Left cardiac atrium (tissue), 4 donors: ENCODE measurements at regions of chr9 and their contacts with region 1.

Region 1: GRCh38 chr9:82961504-82962125 is 101.3 kb downstream of the RASEF start:
- DNase-seq: peak; percentile 78
- ATAC-seq: peak; percentile 92 to 94

Region 2: GRCh38 chr9:82117026-82117811 is 844.4 kb before region 1 on chr9:
- intact Hi-C with region 1: no loop called
- DNase-seq: no peak
- ATAC-seq: peak in 1 of 2 donors; percentile 53

Region 3: DNA sequence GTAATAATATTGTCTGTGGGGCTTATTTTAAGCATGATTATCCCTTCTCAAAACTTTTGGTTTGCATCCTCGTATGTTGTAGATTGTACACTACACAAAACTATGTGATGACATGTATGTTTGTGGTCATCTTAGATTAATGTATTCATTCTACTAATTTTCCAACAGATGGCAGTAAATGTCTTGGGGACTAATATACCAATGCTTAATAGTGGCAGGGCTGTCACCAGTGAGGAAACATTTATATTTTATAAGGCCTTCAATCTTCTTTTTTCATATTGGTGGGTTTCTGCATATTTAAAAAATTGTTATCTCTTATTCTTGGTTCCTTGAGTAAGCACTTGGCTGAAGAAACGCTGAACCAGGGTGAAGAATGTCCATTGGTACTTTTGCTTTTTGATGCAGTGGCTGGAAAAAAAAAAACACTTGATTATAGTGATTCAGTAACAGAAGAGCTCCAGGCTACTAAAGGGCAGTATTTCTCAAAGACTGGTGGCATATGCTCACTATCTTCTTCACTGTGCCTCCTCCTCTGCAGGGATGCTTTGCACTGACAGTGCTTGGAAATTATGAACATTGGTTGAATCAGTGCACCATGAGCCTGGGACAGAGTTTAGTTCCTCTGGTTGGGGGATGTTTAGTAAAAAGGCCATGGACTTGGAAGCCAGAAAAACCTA is 429.0 kb before region 1 on chr9:
- intact Hi-C with region 1: loop called in 1 of 2 experiments (anchors 10 kb)
- DNase-seq: no peak
- ATAC-seq: no peak

Region 4: DNA sequence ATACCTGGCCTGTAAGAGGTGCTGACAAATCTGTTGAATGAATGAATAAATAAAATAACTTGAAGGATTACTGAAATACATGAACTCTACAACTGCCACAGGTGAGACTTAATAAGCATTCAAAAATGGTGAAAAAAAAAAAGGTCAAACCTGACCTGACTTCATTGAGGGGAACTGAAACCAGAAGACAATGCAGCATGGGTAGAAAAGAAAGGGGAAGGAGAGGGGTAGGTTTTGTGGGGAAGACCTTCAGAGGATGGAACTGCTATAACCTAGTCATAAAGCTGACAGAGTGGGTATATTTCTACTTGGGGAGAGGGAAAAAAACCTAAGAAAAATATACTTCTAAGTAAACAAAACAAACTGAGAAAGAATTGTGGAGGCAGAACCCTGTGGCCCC is 44.8 kb after region 1 on chr9:
- intact Hi-C with region 1: no loop called
- DNase-seq: no peak
- ATAC-seq: no peak

Region 5: DNA sequence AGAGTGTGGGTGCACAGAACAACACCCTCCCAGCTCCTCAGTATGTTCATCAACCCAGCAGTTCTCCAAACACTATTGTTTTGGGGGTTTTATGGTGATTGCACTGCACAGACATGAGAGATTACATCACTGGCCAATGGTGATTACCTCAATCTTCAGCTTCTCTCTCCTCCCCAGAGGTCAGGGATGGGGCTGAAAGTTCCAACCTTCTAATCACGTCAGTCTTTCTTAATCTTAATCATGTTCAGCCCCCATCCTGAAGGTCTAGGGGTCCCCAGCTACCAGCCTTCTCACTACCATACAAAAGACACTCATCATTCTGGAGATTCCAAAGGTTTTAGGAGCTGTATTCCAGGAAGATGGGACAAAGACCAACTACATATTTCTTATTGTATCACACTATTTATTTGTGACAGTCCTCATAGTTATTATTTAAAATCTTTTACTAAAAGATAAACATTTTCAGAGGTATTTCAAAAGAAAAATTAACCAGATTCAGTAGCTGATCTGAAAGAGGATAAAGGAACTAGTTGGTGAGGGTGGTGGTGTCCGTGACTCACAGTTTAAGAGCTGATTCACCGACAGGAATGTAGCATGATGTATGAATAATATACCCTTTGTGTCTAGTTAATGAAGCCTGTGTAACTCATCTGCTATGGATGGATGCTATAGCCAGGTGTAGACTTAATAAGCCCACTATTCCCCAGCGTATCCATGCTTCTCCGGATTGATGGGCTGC is 65.7 kb after region 1 on chr9:
- intact Hi-C with region 1: no loop called
- DNase-seq: no peak
- ATAC-seq: no peak